SK-N-SH (cell line): ENCODE measurements at regions of chr9 and their contacts with region 1.

Region 1: DNA sequence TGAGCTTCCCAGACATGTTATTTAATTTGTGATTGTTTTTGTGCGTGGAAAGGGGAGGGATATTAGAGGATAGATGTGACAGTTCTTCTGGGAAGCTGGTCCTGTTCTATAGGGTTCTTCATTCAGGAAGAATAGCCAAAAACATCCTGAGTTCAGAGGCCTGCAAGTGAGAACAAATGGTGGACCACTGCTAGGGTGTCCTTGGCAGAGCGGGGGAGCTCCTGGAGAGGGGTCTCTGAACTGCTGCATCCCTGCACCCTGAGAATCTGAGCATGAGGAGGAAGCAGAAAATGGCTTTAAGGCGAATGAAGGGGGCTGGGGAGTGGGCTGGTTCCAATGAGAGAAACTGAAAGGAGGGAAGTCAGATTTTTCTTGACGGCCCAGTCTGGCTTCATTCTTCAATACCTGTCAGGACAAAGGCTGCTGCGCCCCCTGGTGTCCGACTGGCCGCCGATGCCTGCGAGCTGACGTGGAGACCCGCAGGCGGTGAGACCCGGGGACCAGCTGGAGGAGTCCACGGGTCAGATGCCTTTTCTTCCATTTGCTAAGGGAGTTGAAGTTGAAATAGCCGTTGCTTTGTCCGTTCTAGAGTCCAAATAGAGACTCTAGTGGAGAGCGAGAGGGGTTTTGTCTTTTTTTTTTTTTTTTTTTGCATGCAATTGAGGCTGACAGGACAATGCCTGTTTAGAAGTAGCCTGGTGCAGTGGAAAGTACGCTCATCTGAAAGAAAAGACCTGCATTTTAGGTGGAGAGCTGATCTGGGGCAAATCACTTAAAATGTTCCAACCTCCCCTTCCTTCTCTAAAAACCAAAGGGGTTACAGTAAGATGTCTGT is 39.5 kb upstream of the NFIB start:
- DNase-seq: peak; percentile 91
- H3K4me3 ChIP-seq: peak overlapping the region; percentile 28 to 49
- H3K27ac ChIP-seq: no peak overlapping the region; a peak in 1 of 4 replicates
- H3K4me1 ChIP-seq: peaks cover 0 to 12% of the 10 kb centered on the region in 2 experiments; a peak in 1 of 4 replicates
- H3K27me3 ChIP-seq: no peaks in the 10 kb centered on the region
- CTCF ChIP-seq: peak; percentile 95
- EP300 ChIP-seq: no peak
- RAD21 ChIP-seq: peak; percentile 91

Region 2: GRCh38 chr9:13088720-13089427 is 1264.6 kb before region 1 on chr9:
- CTCF ChIA-PET with region 1: interaction called, 15 read pairs
- POLR2A ChIA-PET with region 1: no interaction called
- DNase-seq: peak; percentile 79
- H3K4me3 ChIP-seq: peak overlapping the region in 1 of 2 experiments; percentile 49; a peak in 2 of 4 replicates
- H3K27ac ChIP-seq: no peak overlapping the region
- H3K4me1 ChIP-seq: peaks cover 0 to 2% of the 10 kb centered on the region in 2 experiments; a peak in 2 of 4 replicates
- H3K27me3 ChIP-seq: no peaks in the 10 kb centered on the region
- CTCF ChIP-seq: peak; percentile 74
- EP300 ChIP-seq: no peak
- RAD21 ChIP-seq: peak; percentile 78

Region 3: GRCh38 chr9:13437866-13438265 is 915.6 kb before region 1 on chr9:
- CTCF ChIA-PET with region 1: interaction called, 10 read pairs
- POLR2A ChIA-PET with region 1: no interaction called
- DNase-seq: no peak
- H3K4me3 ChIP-seq: no peak overlapping the region
- H3K27ac ChIP-seq: no peak overlapping the region
- H3K4me1 ChIP-seq: no peaks in the 10 kb centered on the region
- H3K27me3 ChIP-seq: no peaks in the 10 kb centered on the region
- CTCF ChIP-seq: no peak
- EP300 ChIP-seq: no peak
- RAD21 ChIP-seq: no peak

Region 4: DNA sequence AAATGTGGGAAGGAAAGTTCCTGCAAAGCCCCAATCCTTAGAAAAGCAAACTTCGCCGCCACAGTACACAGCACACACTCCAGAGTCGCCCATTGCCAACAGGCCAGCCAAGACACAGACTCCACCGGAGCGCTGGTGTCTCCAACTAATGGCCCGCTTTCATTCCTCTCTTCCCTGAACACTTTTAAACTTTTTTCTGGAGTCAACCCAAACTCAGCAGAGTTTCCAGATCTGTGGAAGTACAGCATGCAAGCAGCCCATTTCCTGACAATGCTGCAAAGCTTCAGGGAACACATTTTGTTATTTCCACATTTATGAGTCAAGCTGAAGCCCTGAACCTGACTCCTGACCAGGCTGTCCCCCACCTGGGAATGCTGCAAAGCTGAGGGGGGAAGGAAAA is 391.4 kb before region 1 on chr9:
- CTCF ChIA-PET with region 1: no interaction called
- POLR2A ChIA-PET with region 1: no interaction called
- DNase-seq: no peak
- H3K4me3 ChIP-seq: no peak overlapping the region
- H3K27ac ChIP-seq: no peak overlapping the region
- H3K4me1 ChIP-seq: no peaks in the 10 kb centered on the region
- H3K27me3 ChIP-seq: no peaks in the 10 kb centered on the region
- CTCF ChIP-seq: no peak
- EP300 ChIP-seq: no peak
- RAD21 ChIP-seq: no peak

Region 5: DNA sequence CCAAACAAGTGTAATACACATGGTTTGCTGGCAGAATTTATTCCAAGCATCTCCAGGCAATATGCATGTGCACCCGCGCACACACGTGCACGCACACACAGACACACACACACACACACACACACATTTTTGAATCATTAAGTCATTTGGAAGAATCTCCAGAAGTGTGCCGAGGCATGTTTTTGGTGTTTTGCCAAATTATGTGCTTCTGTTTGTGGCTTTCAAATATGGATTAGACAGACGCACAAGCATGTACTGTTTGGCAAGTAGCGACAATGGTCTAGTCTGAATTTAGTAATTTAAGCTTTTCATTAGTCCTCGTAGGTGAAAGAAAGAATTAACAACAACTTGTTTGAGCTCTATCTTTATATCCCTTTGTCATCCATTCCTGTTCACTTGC is 76.2 kb before region 1 on chr9:
- CTCF ChIA-PET with region 1: interaction called, 11 read pairs
- POLR2A ChIA-PET with region 1: no interaction called
- DNase-seq: no peak
- H3K4me3 ChIP-seq: no peak overlapping the region
- H3K27ac ChIP-seq: peak overlapping the region in 1 of 2 experiments; percentile 56; a peak in 3 of 4 replicates
- H3K4me1 ChIP-seq: peaks cover 52 to 56% of the 10 kb centered on the region in 2 experiments
- H3K27me3 ChIP-seq: no peaks in the 10 kb centered on the region
- CTCF ChIP-seq: no peak
- EP300 ChIP-seq: peak; percentile 29 to 56; a peak in 2 of 4 replicates
- RAD21 ChIP-seq: no peak

Region 6: GRCh38 chr9:14336244-14336643 is 17.2 kb before region 1 on chr9:
- CTCF ChIA-PET with region 1: interaction called, 16 read pairs
- POLR2A ChIA-PET with region 1: no interaction called
- DNase-seq: no peak
- H3K4me3 ChIP-seq: no peak overlapping the region
- H3K27ac ChIP-seq: no peak overlapping the region
- H3K4me1 ChIP-seq: no peaks in the 10 kb centered on the region
- H3K27me3 ChIP-seq: no peaks in the 10 kb centered on the region
- CTCF ChIP-seq: no peak
- EP300 ChIP-seq: no peak
- RAD21 ChIP-seq: no peak

Region 7: GRCh38 chr9:14428781-14429230 is 75.4 kb after region 1 on chr9:
- CTCF ChIA-PET with region 1: interaction called, 34 read pairs
- POLR2A ChIA-PET with region 1: no interaction called
- DNase-seq: peak; percentile 53
- H3K4me3 ChIP-seq: no peak overlapping the region; a peak in 1 of 4 replicates
- H3K27ac ChIP-seq: peak overlapping the region in 1 of 2 experiments; percentile 18; a peak in 1 of 4 replicates
- H3K4me1 ChIP-seq: peaks cover 7 to 15% of the 10 kb centered on the region in 2 experiments; a peak in 3 of 4 replicates
- H3K27me3 ChIP-seq: no peaks in the 10 kb centered on the region
- CTCF ChIP-seq: peak; percentile 91
- EP300 ChIP-seq: no peak
- RAD21 ChIP-seq: peak; percentile 76

Region 8: DNA sequence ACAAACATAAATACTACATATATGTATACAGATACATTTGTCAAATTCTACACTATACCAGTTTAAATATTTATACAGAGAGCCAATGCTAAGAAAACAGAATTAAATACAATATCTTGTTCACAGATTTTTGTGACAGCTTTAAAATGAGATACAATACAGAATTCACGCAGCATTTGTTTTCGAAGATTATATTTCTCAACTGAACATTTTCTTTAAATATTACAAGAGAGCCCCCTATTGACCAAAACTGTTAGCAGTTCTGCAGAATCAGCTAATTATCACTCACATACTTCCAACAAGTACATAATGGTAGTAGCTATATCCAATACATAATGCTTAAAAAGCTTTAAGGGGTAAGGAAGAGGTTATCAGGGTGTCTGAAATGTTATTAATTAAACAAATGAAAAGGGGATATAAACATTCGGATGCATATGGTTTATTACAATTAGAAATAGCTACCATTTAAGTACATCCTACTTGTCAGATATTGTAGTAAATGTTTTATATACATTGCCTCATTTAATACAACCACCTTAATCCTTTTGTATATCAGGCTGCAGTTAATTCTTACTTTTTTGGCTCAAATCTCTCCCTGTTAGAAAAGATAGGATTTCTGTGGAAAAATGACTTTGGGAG is 308.1 kb after region 1 on chr9:
- CTCF ChIA-PET with region 1: interaction called, 11 read pairs
- POLR2A ChIA-PET with region 1: no interaction called
- DNase-seq: peak; percentile 58
- H3K4me3 ChIP-seq: no peak overlapping the region
- H3K27ac ChIP-seq: no peak overlapping the region
- H3K4me1 ChIP-seq: no peaks in the 10 kb centered on the region; a peak in 1 of 4 replicates
- H3K27me3 ChIP-seq: no peaks in the 10 kb centered on the region
- CTCF ChIP-seq: peak; percentile 71
- EP300 ChIP-seq: no peak
- RAD21 ChIP-seq: peak; percentile 78